Psoas muscle (tissue), 8 donors: ENCODE measurements at regions of chr3 and their contacts with region 1.

Region 1: GRCh38 chr3:61589856-61590255 is 28.5 kb downstream of the PTPRG start:
- DNase-seq: no peak
- ATAC-seq: peak; percentile 31 to 88 (median 76)
- H3K4me3 ChIP-seq: no peak overlapping the region
- H3K27ac ChIP-seq: no peak overlapping the region
- H3K4me1 ChIP-seq: peaks cover 22% of the 10 kb centered on the region
- H3K27me3 ChIP-seq: no peaks in the 10 kb centered on the region
- CTCF ChIP-seq: no peak

Region 2: GRCh38 chr3:61464518-61465140 is 125.2 kb before region 1 on chr3:
- intact Hi-C with region 1: no loop called
- DNase-seq: no peak
- ATAC-seq: no peak
- H3K4me3 ChIP-seq: no peak overlapping the region
- H3K27ac ChIP-seq: no peak overlapping the region
- H3K4me1 ChIP-seq: no peaks in the 10 kb centered on the region
- H3K27me3 ChIP-seq: no peaks in the 10 kb centered on the region
- CTCF ChIP-seq: no peak

Region 3: GRCh38 chr3:61617041-61617440 is 27.2 kb after region 1 on chr3:
- intact Hi-C with region 1: no loop called
- DNase-seq: no peak
- ATAC-seq: peak in 2 of 4 donors; percentile 35 to 48
- H3K4me3 ChIP-seq: no peak overlapping the region
- H3K27ac ChIP-seq: no peak overlapping the region
- H3K4me1 ChIP-seq: peaks cover 17% of the 10 kb centered on the region
- H3K27me3 ChIP-seq: no peaks in the 10 kb centered on the region
- CTCF ChIP-seq: no peak

Region 4: DNA sequence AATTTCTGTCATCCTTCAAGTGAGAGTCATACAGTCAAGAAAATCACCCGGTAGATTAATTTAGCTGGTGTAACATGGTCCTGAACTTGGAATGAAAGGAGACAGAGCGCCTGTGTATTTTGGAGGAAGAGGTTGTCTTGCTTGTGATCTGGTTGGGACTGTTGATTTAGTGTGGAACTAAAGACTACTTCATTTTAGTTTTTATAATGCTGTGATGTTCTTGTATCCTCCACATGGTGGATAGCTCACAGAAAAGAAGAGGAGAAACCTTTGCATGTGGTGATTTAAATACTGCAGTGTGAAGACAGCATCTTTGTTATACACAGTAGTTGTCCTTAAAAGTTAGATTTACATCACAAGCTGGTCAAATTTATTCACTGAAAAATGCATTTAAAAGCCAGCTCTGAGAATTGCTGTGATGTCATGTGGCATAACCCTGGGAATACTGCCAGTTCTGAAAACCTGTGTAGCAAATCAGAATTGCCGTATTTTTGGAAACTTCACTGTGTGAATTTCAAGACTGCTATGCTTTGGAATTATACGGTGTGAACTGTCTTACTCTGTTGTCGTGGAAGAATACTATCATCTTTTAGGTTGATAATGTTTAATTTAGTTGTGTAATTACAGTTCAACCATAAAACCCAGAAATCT is 240.0 kb after region 1 on chr3:
- intact Hi-C with region 1: loop called in 1 of 2 experiments (anchors 10 kb)
- DNase-seq: no peak
- ATAC-seq: peak in 2 of 4 donors; percentile 7 to 14
- H3K4me3 ChIP-seq: no peak overlapping the region
- H3K27ac ChIP-seq: peak overlapping the region; percentile 33
- H3K4me1 ChIP-seq: peaks cover 16% of the 10 kb centered on the region
- H3K27me3 ChIP-seq: no peaks in the 10 kb centered on the region
- CTCF ChIP-seq: no peak